HCT116 (cell line): ENCODE measurements at regions of chr5 and their contacts with region 1.

Region 1: DNA sequence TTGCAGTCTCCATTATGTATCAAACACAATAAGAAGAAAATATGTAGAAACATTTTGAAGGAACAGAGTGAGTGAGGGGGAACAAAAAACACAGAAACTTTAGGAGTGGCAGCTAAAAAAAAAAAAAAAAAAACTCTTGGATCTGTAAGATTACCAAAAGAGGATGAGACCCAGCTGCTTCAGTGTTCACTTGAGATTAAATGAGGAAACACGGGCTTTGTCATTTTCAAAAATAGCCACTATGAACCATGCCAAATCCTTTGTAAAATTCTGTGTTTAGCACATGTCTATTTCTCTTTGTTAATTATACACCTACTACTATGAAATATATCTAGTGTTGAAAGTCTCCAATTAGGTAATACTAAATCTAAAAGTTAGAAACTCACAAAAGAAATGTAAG is 485.9 kb downstream of the EFNA5 start:
- DNase-seq: no peak
- ATAC-seq: no peak
- H3K4me3 ChIP-seq: no peak overlapping the region
- H3K27ac ChIP-seq: no peak overlapping the region
- H3K4me1 ChIP-seq: no peaks in the 10 kb centered on the region
- H3K27me3 ChIP-seq: no peaks in the 10 kb centered on the region
- CTCF ChIP-seq: no peak
- POLR2A ChIP-seq: no peak
- RAD21 ChIP-seq: no peak

Region 2: DNA sequence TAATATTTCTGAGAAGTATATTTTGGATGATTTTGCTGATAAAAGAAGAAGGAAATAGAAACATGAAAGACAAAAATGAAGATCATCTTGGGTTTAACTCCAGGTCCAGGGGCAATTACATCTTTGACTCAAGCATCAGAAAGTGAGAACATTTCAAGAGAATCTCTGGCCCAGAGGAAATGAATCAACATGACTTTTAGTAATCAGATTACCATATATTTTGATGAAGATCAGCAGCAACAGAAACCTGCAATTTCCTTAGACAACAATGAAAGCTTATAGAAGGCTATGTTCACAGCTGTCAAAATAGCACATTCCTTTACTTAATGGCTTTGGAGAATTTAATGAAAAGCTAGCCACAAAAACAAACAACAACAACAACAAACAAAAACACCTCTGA is 152.2 kb before region 1 on chr5:
- CTCF ChIA-PET with region 1: no interaction called
- POLR2A ChIA-PET with region 1: no interaction called
- RAD21 ChIA-PET with region 1: no interaction called
- intact Hi-C with region 1: no loop called
- DNase-seq: no peak
- ATAC-seq: no peak
- H3K4me3 ChIP-seq: no peak overlapping the region
- H3K27ac ChIP-seq: no peak overlapping the region
- H3K4me1 ChIP-seq: no peaks in the 10 kb centered on the region
- H3K27me3 ChIP-seq: no peaks in the 10 kb centered on the region
- CTCF ChIP-seq: no peak
- POLR2A ChIP-seq: no peak
- RAD21 ChIP-seq: no peak

Region 3: DNA sequence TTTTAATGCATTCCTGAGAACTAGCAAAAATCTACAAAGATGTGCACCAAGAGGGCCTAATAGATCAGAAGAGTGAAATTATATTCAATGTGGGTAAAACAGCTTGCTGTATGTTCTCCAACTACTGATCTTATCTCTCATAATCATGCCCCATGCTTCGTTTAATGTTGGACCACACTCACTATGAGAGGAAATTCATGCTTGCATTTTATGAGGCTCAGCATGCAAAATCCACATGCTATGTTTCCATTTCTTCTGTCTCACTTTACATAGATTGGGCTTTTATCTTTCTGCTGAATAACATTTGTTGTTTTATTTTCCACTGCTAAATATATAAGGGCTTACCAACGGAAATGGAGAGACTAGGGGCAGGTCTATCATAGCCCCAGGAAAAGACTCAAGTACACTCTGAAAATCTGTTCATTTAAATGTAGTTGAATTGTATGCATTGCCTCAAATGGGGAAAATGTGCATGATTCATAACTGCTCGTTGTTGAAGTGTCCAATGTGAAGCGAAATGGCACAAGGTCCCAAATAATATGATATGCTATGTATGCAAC is 11.7 kb after region 1 on chr5:
- CTCF ChIA-PET with region 1: no interaction called
- POLR2A ChIA-PET with region 1: no interaction called
- RAD21 ChIA-PET with region 1: no interaction called
- intact Hi-C with region 1: no loop called
- DNase-seq: no peak
- ATAC-seq: no peak
- H3K4me3 ChIP-seq: no peak overlapping the region
- H3K27ac ChIP-seq: no peak overlapping the region
- H3K4me1 ChIP-seq: no peaks in the 10 kb centered on the region
- H3K27me3 ChIP-seq: no peaks in the 10 kb centered on the region
- CTCF ChIP-seq: no peak
- POLR2A ChIP-seq: no peak
- RAD21 ChIP-seq: no peak

Region 4: DNA sequence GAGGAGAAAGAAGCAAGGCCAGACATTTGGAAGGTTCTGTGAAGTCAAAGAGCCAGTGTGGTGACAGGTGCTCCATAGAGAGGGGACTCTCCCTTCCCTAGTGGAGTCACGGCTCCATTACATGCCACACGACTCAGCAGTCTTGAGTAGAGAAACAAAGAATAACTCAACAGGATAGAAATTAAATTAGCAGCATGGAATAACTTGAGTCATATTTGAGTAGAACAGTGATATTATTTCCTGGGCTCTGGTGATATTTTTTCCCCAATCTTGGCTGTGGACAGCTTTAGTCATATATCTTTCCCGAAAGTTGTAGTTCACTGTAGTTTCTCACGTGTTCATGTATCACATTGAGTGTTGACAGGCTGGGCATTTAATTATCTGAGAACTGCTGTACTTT is 635.6 kb after region 1 on chr5:
- CTCF ChIA-PET with region 1: no interaction called
- POLR2A ChIA-PET with region 1: no interaction called
- RAD21 ChIA-PET with region 1: no interaction called
- intact Hi-C with region 1: loop called (anchors 5 kb)
- DNase-seq: no peak
- ATAC-seq: peak; percentile 52; the same call in 1 of the 2 replicates
- H3K4me3 ChIP-seq: no peak overlapping the region
- H3K27ac ChIP-seq: no peak overlapping the region
- H3K4me1 ChIP-seq: no peaks in the 10 kb centered on the region
- H3K27me3 ChIP-seq: no peaks in the 10 kb centered on the region
- CTCF ChIP-seq: 0 out of 6 replicates have a peak, but pooled peaks of 2 of the 3 experiments have one; percentile 1 to 5
- POLR2A ChIP-seq: no peak
- RAD21 ChIP-seq: no peak

Region 5: GRCh38 chr5:107840161-107840560 is 655.3 kb after region 1 on chr5:
- CTCF ChIA-PET with region 1: no interaction called
- POLR2A ChIA-PET with region 1: no interaction called
- RAD21 ChIA-PET with region 1: no interaction called
- intact Hi-C with region 1: no loop called
- DNase-seq: no peak
- ATAC-seq: no peak
- H3K4me3 ChIP-seq: no peak overlapping the region
- H3K27ac ChIP-seq: no peak overlapping the region
- H3K4me1 ChIP-seq: no peaks in the 10 kb centered on the region
- H3K27me3 ChIP-seq: no peaks in the 10 kb centered on the region
- CTCF ChIP-seq: no peak
- POLR2A ChIP-seq: no peak
- RAD21 ChIP-seq: no peak

Region 6: GRCh38 chr5:107853031-107853430 is 668.2 kb after region 1 on chr5:
- CTCF ChIA-PET with region 1: no interaction called
- POLR2A ChIA-PET with region 1: no interaction called
- RAD21 ChIA-PET with region 1: no interaction called
- intact Hi-C with region 1: no loop called
- DNase-seq: no peak
- ATAC-seq: no peak
- H3K4me3 ChIP-seq: no peak overlapping the region
- H3K27ac ChIP-seq: no peak overlapping the region
- H3K4me1 ChIP-seq: no peaks in the 10 kb centered on the region
- H3K27me3 ChIP-seq: no peaks in the 10 kb centered on the region
- CTCF ChIP-seq: no peak
- POLR2A ChIP-seq: no peak
- RAD21 ChIP-seq: no peak